Dorsolateral prefrontal cortex (tissue), 120 donors: ENCODE measurements at regions of chr7 and their contacts with region 1.

Region 1: GRCh38 chr7:45136106-45137060 is 21.2 kb upstream of the RAMP3 start:
- DNase-seq: peak in 5 of 10 donors; percentile 53 to 65 (median 63)
- H3K4me3 ChIP-seq: no peak overlapping the region
- H3K27ac ChIP-seq: peak overlapping the region in 10 of 59 donors; percentile 1 to 73 (median 30)
- H3K27me3 ChIP-seq: no peaks in the 10 kb centered on the region
- CTCF ChIP-seq: peak; percentile 74 to 98 (median 89)

Region 2: DNA sequence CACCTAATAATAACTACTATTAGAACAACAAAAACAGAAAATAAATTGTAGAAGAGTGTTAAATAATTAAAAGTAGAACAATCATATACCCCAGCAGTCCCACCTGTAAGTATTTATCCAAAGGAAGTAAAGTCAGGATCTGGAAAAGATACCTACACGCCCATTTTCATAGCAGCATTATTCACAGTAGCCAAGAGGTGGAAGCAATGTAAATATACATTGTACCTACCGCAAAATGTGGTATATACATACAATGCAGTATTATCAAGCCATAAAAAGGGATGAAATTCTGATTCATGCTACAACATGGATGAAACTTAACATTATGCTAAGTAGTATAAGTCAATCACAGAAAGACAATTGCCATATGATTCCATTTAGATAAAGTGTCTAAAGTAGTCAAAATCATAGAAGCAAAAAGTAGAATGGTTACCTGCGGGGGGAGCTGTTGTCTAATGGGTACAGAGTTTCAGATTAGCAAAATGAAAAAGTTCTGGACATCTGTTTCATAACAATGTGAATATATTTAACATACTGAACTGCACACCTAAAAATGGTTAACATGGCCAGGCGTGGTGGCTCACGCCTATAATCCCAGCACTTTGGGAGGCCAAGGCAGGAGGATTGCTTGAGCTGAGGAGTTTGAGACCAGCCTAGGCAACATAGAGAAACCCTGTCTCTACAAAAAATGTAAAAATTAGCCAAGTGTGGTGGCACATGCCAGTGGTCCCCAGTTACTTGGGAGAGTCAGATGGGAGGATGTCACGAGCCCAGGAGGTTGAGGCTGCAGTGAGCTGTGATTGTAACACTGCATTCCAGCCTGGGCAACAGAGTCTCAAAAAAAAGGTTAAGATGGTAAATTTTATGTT is 548.3 kb before region 1 on chr7:
- intact Hi-C with region 1: loop called in 1 of 2 experiments (anchors 5 kb)
- DNase-seq: peak in 2 of 10 donors; percentile 33 to 56
- H3K4me3 ChIP-seq: no peak overlapping the region
- H3K27ac ChIP-seq: no peak overlapping the region
- H3K27me3 ChIP-seq: no peaks in the 10 kb centered on the region
- CTCF ChIP-seq: peak; percentile 11 to 79 (median 64)

Region 3: GRCh38 chr7:44858161-44858560 is 278.2 kb before region 1 on chr7:
- intact Hi-C with region 1: loop called (anchors 5 kb)
- DNase-seq: no peak
- H3K4me3 ChIP-seq: no peak overlapping the region
- H3K27ac ChIP-seq: no peak overlapping the region
- H3K27me3 ChIP-seq: no peaks in the 10 kb centered on the region
- CTCF ChIP-seq: peak in 37 of 56 donors; percentile 10 to 56 (median 32)

Region 4: DNA sequence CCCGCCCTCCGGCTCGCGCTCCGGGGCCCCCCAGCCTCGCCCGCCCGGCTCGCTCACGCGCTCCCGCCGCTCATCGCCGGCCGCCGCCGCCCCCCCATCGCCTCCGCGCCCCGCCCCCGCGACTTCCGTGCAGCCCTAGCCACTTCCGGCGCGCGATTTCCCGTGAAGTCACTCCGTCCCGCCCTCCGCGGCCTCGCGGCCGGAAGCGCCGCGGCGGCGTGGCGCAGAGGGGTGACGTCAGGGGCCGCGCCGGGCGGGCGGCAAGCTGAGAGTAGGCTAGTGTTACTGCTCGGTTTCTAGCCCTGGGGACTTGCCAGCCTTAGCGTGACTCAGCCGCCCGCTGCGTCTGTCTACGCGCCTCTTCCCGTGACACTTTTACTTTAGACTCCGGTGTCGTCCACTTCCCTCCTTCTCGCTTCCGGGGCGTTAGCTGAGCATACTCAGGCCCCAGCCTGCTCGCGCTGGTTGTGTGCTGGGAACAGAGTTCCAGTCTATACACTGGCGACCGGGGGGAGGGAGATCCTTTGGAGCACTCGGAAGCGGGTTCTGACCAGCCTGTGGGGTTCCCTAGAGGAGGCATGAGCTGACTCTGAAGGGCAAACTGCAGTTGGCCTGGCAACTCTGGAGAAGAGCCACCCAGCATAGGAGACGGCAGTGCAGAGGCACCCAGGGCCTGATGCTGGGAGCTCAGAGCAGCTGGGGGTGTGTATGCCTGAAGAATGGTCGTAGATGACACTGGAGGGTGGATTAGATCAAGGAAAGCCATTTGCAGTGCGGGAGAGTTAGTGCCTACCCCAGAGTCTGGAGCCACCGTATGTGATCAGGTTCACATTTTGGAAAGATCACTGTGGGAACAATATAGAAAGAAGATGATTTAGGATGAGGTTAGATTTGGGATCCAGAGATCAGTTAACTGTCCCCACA is 250.7 kb before region 1 on chr7 and contains the start of gene PURB:
- intact Hi-C with region 1: loop called in 1 of 2 experiments (anchors 10 kb)
- DNase-seq: peak; percentile 88 to 97 (median 94)
- H3K4me3 ChIP-seq: peak within 1 kb of the TSS; percentile 70 to 100 (median 94)
- H3K27ac ChIP-seq: peak within 1 kb of the TSS; percentile 82 to 99 (median 97)
- H3K27me3 ChIP-seq: no peaks in the 10 kb centered on the region
- CTCF ChIP-seq: peak in 11 of 56 donors; percentile 6 to 33 (median 22)
- total RNA-seq, gene PURB: 28.0 to 55.6 (median 40.5) TPM

Region 5: DNA sequence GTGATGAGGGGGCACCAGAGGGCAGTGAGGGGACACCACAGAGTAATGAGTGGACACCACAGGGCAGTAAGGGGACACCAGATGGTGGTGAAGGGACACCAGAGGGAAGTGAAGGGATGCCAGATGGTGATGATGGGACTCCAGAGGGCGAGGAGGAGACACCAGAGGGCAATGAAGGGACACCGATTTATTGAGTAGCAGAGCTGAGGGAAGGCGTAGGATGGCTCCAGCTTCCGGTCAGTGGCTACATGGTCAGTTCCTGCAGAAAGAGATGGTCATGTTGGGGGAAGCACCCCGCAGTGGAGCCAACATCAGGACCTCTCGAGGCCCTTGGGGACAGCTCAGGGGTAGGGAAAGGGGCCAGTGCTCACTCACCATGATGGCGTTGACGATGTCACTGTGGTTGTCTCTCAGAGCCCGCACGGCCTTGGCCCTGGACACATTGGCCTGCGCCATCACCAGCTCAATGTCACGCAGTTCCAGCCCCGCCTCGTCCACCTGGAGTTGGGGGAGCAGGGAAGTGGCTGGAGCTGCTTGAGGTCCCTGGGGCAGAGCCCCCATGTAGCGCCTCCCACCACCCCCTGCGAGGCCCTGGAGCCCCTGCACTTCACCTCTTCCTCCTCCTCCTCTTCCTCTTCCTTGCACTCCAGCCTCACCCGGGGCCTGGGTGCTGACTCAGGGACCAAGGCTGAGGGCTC is 56.0 kb before region 1 on chr7:
- intact Hi-C with region 1: loop called in 1 of 2 experiments (anchors 2 kb)
- DNase-seq: peak in 1 of 10 donors; percentile 7
- H3K4me3 ChIP-seq: no peak overlapping the region
- H3K27ac ChIP-seq: peak overlapping the region in 26 of 59 donors; percentile 4 to 90 (median 80)
- H3K27me3 ChIP-seq: no peaks in the 10 kb centered on the region
- CTCF ChIP-seq: no peak

Region 6: GRCh38 chr7:45267266-45267665 is 130.9 kb after region 1 on chr7:
- intact Hi-C with region 1: no loop called
- DNase-seq: no peak
- H3K4me3 ChIP-seq: no peak overlapping the region
- H3K27ac ChIP-seq: no peak overlapping the region
- H3K27me3 ChIP-seq: peaks cover 0 to 10% (median 0%) of the 10 kb centered on the region in 45 donors
- CTCF ChIP-seq: no peak